Activated CD4-positive, alpha-beta T cell treated with anti-CD3 and anti-CD28 coated beads, Interleukin-2, amount 10 ng/mL, durations not matched to agents 7 days and 5 days (primary cell): ENCODE measurements at regions of chr4 and their contacts with region 1.

Region 1: DNA sequence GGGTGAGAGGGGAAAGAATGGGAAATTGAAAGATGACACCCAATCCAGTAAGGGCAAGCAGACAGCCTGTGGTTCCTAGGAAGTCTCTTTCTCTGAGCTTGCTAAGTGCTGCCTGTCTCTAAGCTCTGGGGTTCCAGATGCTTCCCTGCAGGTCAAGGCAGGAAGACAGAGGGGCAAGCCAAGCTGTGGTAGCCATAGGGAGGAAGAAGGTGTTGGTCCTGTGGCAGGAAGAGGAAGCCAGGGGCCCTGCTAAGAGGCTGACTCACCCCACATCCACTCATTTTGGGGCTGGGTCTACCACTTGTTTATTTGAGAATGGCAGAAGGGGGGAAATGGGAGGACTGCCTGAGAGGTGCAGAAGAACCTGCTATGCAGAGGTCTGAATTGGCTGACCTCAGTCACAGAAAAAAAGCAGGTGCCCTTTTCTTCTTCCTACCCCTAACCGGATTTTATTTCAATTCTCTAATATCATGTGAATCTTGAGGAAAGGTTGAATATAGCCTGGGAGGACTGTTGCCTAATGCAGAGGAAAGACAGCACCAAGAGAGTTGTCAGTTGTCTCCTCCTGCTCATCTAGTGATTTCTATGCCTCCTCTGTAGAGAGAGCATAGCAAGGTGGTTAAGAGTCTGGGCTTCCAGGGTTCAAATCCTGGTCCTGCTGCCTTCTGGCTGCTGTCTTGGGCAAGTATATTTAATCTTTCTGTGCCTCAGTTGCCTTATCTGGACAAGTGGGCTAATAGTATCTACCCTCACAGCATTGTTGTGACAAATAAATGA is 27.4 kb downstream of the HOPX start:
- DNase-seq: peak; percentile 65
- H3K4me3 Mint-ChIP-seq: peak overlapping the region; percentile 84
- H3K27ac Mint-ChIP-seq: peak overlapping the region; percentile 86
- H3K4me1 Mint-ChIP-seq: peaks cover 81% of the 10 kb centered on the region
- H3K27me3 Mint-ChIP-seq: peaks cover 23% of the 10 kb centered on the region

Region 2: DNA sequence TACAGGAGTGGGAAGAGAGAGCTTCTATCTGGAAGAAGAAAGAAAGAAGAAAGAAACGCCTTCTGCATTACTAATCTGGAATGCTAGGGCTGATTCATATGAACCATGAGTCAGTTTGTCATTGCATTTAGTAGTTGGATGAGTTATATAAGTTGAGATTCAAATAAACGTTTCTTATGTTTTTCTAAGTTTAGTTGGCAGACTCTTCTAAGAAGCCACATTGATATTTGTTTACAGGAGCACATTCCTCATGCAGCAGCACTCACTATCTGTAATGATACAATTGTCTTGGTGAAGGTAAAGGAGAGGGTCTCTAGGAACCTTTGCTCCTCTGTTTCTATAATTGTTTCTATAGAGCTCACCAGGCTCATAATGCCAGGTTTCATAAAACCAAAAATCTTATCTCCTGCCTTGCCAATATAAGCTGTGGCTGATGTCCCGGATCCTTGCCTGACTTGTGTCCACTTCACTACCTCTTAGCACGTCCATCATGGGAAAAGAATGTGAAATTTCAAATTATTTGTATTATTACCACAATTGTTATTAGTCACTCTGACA is 12.1 kb before region 1 on chr4:
- CTCF ChIA-PET with region 1: interaction called, 34 read pairs
- POLR2A ChIA-PET with region 1: no interaction called
- DNase-seq: no peak
- H3K4me3 Mint-ChIP-seq: no peak overlapping the region
- H3K27ac Mint-ChIP-seq: no peak overlapping the region
- H3K4me1 Mint-ChIP-seq: peaks cover 19% of the 10 kb centered on the region
- H3K27me3 Mint-ChIP-seq: no peaks in the 10 kb centered on the region

Region 3: GRCh38 chr4:56686537-56687231 is 33.0 kb after region 1 on chr4:
- CTCF ChIA-PET with region 1: no interaction called
- POLR2A ChIA-PET with region 1: no interaction called
- DNase-seq: no peak
- H3K4me3 Mint-ChIP-seq: no peak overlapping the region
- H3K27ac Mint-ChIP-seq: no peak overlapping the region
- H3K4me1 Mint-ChIP-seq: peaks cover 11% of the 10 kb centered on the region
- H3K27me3 Mint-ChIP-seq: peaks cover 31% of the 10 kb centered on the region

Region 4: GRCh38 chr4:56773346-56773745 is 119.7 kb after region 1 on chr4:
- CTCF ChIA-PET with region 1: no interaction called
- POLR2A ChIA-PET with region 1: no interaction called
- DNase-seq: no peak
- H3K4me3 Mint-ChIP-seq: no peak overlapping the region
- H3K27ac Mint-ChIP-seq: no peak overlapping the region
- H3K4me1 Mint-ChIP-seq: peaks cover 2% of the 10 kb centered on the region
- H3K27me3 Mint-ChIP-seq: no peaks in the 10 kb centered on the region

Region 5: GRCh38 chr4:57124145-57124544 is 470.5 kb after region 1 on chr4:
- CTCF ChIA-PET with region 1: no interaction called
- POLR2A ChIA-PET with region 1: no interaction called
- DNase-seq: no peak
- H3K4me3 Mint-ChIP-seq: no peak overlapping the region
- H3K27ac Mint-ChIP-seq: no peak overlapping the region
- H3K4me1 Mint-ChIP-seq: no peaks in the 10 kb centered on the region
- H3K27me3 Mint-ChIP-seq: peaks cover under 1% of the 10 kb centered on the region